ENCODE measurements at regions of chr18 and their contacts with region 1.

Region 1: GRCh38 chr18:67243799-67244587 is 272.5 kb downstream of the DSEL start:
- DNase-seq: no peak
- ATAC-seq: peak; percentile 53
- H3K4me3 Mint-ChIP-seq: peak overlapping the region; percentile 72
- H3K27ac Mint-ChIP-seq: peak overlapping the region; percentile 87
- H3K4me1 Mint-ChIP-seq: peaks cover 31% of the 10 kb centered on the region
- H3K27me3 Mint-ChIP-seq: no peaks in the 10 kb centered on the region
- CTCF ChIP-seq: no peak

Region 2: DNA sequence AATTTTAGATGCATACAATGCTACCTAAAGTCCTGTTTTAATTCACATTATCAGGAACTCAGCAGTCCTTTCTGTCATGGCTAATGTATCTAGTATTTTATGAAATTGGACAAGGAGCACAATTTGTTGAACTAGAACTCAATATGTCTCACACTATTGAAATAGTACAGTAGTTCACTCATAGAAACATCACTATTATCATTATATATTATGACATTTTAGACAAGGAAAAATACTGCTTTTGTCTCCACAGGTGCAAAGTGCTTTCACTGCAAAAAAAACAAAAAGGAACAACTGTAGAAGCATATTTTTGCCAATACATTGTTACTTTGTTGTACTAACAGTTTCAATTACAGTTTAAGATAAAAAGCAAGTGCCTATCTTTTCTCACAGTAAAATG is 220.9 kb before region 1 on chr18:
- CTCF ChIA-PET with region 1: no interaction called
- POLR2A ChIA-PET with region 1: no interaction called
- intact Hi-C with region 1: no loop called
- DNase-seq: no peak
- ATAC-seq: no peak
- H3K4me3 Mint-ChIP-seq: no peak overlapping the region
- H3K27ac Mint-ChIP-seq: no peak overlapping the region
- H3K4me1 Mint-ChIP-seq: no peaks in the 10 kb centered on the region
- H3K27me3 Mint-ChIP-seq: no peaks in the 10 kb centered on the region
- CTCF ChIP-seq: no peak

Region 3: GRCh38 chr18:67359873-67360838 is 116.2 kb after region 1 on chr18:
- CTCF ChIA-PET with region 1: no interaction called
- POLR2A ChIA-PET with region 1: no interaction called
- intact Hi-C with region 1: loop called (anchors 5 kb)
- DNase-seq: peak; percentile 58
- ATAC-seq: peak; percentile 97
- H3K4me3 Mint-ChIP-seq: no peak overlapping the region
- H3K27ac Mint-ChIP-seq: no peak overlapping the region
- H3K4me1 Mint-ChIP-seq: peaks cover 14% of the 10 kb centered on the region
- H3K27me3 Mint-ChIP-seq: peaks cover 2% of the 10 kb centered on the region
- CTCF ChIP-seq: no peak